Mammary epithelial cell (primary cell): ENCODE measurements at regions of chr11 and their contacts with region 1.

Region 1: GRCh38 chr11:57493507-57494503 is 21.7 kb downstream of the SLC43A1 start:
- DNase-seq: peak; percentile 51
- H3K4me3 ChIP-seq: no peak overlapping the region
- H3K27ac ChIP-seq: no peak overlapping the region
- H3K4me1 ChIP-seq: no peaks in the 10 kb centered on the region
- H3K27me3 ChIP-seq: no peaks in the 10 kb centered on the region
- CTCF ChIP-seq: peak; percentile 91

Region 2: DNA sequence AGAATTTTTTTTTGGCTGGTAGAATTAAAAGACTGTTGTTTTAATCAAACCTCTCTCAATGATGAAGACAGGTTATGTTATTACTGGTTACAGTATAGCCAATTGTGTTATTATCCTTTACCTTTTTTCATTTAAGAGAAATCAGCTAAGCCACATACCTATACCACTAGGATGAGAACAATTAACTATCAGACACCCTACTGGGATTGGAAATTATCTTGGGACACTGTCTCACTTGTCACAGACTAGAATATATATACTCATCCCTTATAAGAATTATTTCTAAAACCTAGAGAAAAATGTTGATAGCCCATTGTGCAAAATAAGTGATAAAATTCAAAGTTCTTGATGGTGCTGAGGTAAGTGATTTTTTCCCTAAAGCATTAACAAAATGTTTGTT is 1466.5 kb before region 1 on chr11 and contains the start of gene OR5AS1:
- CTCF ChIA-PET with region 1: no interaction called
- dilution Hi-C with region 1: no loop called
- in situ Hi-C with region 1: no loop called
- intact Hi-C with region 1: no loop called
- DNase-seq: no peak
- H3K4me3 ChIP-seq: no peak within 1 kb of the TSS
- H3K27ac ChIP-seq: no peak within 1 kb of the TSS
- H3K4me1 ChIP-seq: no peaks in the 10 kb centered on the region
- H3K27me3 ChIP-seq: no peaks in the 10 kb centered on the region
- CTCF ChIP-seq: no peak
- total RNA-seq, gene OR5AS1: not detected

Region 3: GRCh38 chr11:57530596-57531507 is 37.0 kb after region 1 on chr11 and contains the start of gene TIMM10:
- CTCF ChIA-PET with region 1: no interaction called
- dilution Hi-C with region 1: no loop called
- in situ Hi-C with region 1: no loop called
- intact Hi-C with region 1: loop called (anchors 1 kb)
- DNase-seq: peak; percentile 99
- H3K4me3 ChIP-seq: peak within 1 kb of the TSS; percentile 55 to 77 (median 75)
- H3K27ac ChIP-seq: peak within 1 kb of the TSS; percentile 65
- H3K4me1 ChIP-seq: peaks cover 21% of the 10 kb centered on the region
- H3K27me3 ChIP-seq: no peaks in the 10 kb centered on the region
- CTCF ChIP-seq: no peak
- total RNA-seq, gene TIMM10: 24.8 to 58.9 TPM

Region 4: GRCh38 chr11:57562596-57562995 is 68.8 kb after region 1 on chr11:
- CTCF ChIA-PET with region 1: no interaction called
- dilution Hi-C with region 1: no loop called
- in situ Hi-C with region 1: no loop called
- intact Hi-C with region 1: loop called (anchors 1 kb)
- DNase-seq: peak; percentile 29
- H3K4me3 ChIP-seq: no peak overlapping the region
- H3K27ac ChIP-seq: no peak overlapping the region
- H3K4me1 ChIP-seq: peaks cover 11% of the 10 kb centered on the region
- H3K27me3 ChIP-seq: no peaks in the 10 kb centered on the region
- CTCF ChIP-seq: peak; percentile 16 to 23

Region 5: DNA sequence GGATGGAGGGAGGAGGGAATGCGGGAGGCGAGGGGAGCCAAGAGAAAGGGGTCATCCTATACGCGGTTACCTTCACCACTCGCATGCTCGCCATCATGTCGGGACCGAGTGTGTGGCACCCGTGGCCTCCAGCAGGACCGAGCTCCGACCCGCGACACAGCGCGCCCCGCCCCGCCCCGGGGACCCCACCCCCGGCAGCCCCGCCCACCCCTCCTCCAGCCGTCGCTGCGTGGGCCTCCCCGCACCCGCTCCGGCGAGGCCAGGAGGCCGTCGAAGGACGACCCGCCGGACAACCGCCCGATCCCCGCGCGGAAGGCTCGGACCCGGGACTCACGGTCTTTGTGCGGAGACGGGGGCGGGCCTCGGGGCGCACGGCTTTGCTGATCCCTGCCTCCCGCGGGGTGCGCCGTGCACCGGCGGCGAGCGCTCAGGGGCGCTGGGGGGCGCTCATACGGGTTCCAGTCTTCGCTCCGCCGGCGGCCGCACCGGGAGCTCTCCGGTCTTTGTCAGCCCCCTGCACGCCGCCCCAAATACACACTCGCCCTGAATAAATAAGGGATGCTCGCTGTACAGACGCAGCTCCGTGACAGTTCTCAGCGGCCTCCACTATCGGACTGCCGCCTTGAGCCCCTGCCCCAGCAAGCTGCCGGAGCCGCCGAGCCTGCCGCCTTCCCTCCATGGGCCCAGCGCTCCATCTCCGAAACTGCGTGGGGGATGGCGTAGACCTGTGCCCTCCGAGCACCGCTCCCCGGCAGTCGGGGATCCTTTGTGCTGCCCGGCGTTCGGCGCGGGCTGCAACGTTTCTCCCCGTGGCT is 73.9 kb after region 1 on chr11 and contains the start of gene UBE2L6:
- CTCF ChIA-PET with region 1: no interaction called
- dilution Hi-C with region 1: no loop called
- in situ Hi-C with region 1: no loop called
- intact Hi-C with region 1: loop called (anchors 1 kb)
- DNase-seq: no peak
- H3K4me3 ChIP-seq: peak within 1 kb of the TSS; percentile 77 to 96 (median 90)
- H3K27ac ChIP-seq: peak within 1 kb of the TSS; percentile 44
- H3K4me1 ChIP-seq: peaks cover 27% of the 10 kb centered on the region
- H3K27me3 ChIP-seq: no peaks in the 10 kb centered on the region
- CTCF ChIP-seq: no peak
- total RNA-seq, gene UBE2L6: 34.2 to 46.8 TPM

Region 6: GRCh38 chr11:57649826-57650738 is 156.3 kb after region 1 on chr11 and contains the start of gene YPEL4:
- CTCF ChIA-PET with region 1: interaction called, 6 read pairs
- dilution Hi-C with region 1: no loop called
- in situ Hi-C with region 1: no loop called
- intact Hi-C with region 1: loop called (anchors 2 kb)
- DNase-seq: peak; percentile 62
- H3K4me3 ChIP-seq: peak within 1 kb of the TSS in 2 of 3 experiments; percentile 35 to 44
- H3K27ac ChIP-seq: no peak within 1 kb of the TSS
- H3K4me1 ChIP-seq: peaks cover 39% of the 10 kb centered on the region
- H3K27me3 ChIP-seq: no peaks in the 10 kb centered on the region
- CTCF ChIP-seq: no peak
- total RNA-seq, gene YPEL4: under 0.01 to 0.35 TPM

Region 7: GRCh38 chr11:58152781-58153180 is 659.0 kb after region 1 on chr11:
- CTCF ChIA-PET with region 1: no interaction called
- dilution Hi-C with region 1: no loop called
- in situ Hi-C with region 1: no loop called
- intact Hi-C with region 1: no loop called
- DNase-seq: no peak
- H3K4me3 ChIP-seq: no peak overlapping the region
- H3K27ac ChIP-seq: no peak overlapping the region
- H3K4me1 ChIP-seq: no peaks in the 10 kb centered on the region
- H3K27me3 ChIP-seq: no peaks in the 10 kb centered on the region
- CTCF ChIP-seq: no peak